ENCODE measurements at regions of chr6 and their contacts with region 1.

Region 1: GRCh38 chr6:163956571-163957407 is 542.3 kb downstream of the QKI start:
- DNase-seq: peak; percentile 80
- ATAC-seq: peak; percentile 91 to 93
- H3K4me3 ChIP-seq: no peak overlapping the region
- H3K27ac ChIP-seq: no peak overlapping the region
- H3K4me1 ChIP-seq: peaks cover 11% of the 10 kb centered on the region
- H3K27me3 ChIP-seq: no peaks in the 10 kb centered on the region
- CTCF ChIP-seq: peak; percentile 94

Region 2: DNA sequence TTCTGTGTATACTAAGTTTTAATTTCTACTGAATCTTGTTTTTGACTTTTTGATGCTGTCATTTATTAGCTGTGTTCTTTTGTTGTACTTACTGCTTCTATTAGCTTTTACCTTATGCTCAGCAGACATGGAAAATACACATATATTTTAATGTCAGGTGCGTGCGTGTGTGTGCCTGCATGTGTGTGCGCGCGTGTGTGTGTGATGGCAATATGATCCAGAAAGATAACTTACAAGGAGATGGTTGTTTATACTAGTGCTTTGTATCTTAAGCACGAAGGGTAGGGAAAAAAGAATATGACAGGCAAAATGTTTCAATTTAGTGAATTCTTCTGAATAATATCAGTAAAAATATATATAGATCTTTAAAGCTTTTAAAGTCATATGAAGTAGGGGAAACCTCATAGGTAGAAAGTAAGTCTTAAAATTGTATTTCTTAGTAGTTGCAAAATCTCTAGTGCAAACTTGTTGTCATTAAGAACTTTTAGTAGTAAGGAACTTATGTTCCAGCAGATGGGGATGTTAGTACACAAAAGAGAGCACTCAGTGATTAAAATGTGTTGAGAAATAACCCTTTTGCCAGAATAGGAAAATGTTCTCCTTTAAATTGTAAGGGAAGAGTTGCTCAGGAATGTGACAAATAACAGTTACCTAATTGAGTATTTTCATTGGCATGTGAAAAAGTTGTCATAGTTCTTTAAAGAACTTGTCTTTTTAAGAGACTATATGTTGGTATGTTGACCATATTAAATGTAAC is 529.1 kb before region 1 on chr6:
- intact Hi-C with region 1: loop called (anchors 10 kb)
- DNase-seq: no peak
- ATAC-seq: peak; percentile 49 to 64
- H3K4me3 ChIP-seq: peak overlapping the region; percentile 2
- H3K27ac ChIP-seq: no peak overlapping the region
- H3K4me1 ChIP-seq: peaks cover 92% of the 10 kb centered on the region
- H3K27me3 ChIP-seq: no peaks in the 10 kb centered on the region
- CTCF ChIP-seq: peak; percentile 51

Region 3: GRCh38 chr6:164214066-164214465 is 257.3 kb after region 1 on chr6:
- intact Hi-C with region 1: no loop called
- DNase-seq: no peak
- ATAC-seq: no peak
- H3K4me3 ChIP-seq: no peak overlapping the region
- H3K27ac ChIP-seq: no peak overlapping the region
- H3K4me1 ChIP-seq: no peaks in the 10 kb centered on the region
- H3K27me3 ChIP-seq: no peaks in the 10 kb centered on the region
- CTCF ChIP-seq: no peak